ENCODE measurements at regions of chr20 and their contacts with region 1.

Region 1: GRCh38 chr20:41339507-41340326 is 904 bp upstream of the LPIN3 start:
- DNase-seq: peak; percentile 90 to 93
- H3K4me3 ChIP-seq: peak overlapping the region in 1 of 3 donors; percentile 22
- H3K27ac ChIP-seq: peak overlapping the region; percentile 21 to 84 (median 81)
- H3K4me1 ChIP-seq: peaks cover 25 to 50% of the 10 kb centered on the region in 2 donors
- H3K27me3 ChIP-seq: no peaks in the 10 kb centered on the region
- CTCF ChIP-seq: peak; percentile 97 to 99 (median 99)
- POLR2A ChIP-seq: peak in 1 of 2 donors; percentile 28

Region 2: GRCh38 chr20:41136680-41137613 is 202.8 kb before region 1 on chr20 and contains the start of gene PLCG1:
- intact Hi-C with region 1: loop called (anchors 10 kb)
- DNase-seq: peak; percentile 93
- H3K4me3 ChIP-seq: peak within 1 kb of the TSS; percentile 73 to 93 (median 93)
- H3K27ac ChIP-seq: peak within 1 kb of the TSS; percentile 89 to 98 (median 96)
- H3K4me1 ChIP-seq: peaks cover 36 to 38% of the 10 kb centered on the region in 2 donors
- H3K27me3 ChIP-seq: no peaks in the 10 kb centered on the region
- CTCF ChIP-seq: peak in 2 of 6 experiments; percentile 1 to 23
- POLR2A ChIP-seq: peak; percentile 71 to 89
- total RNA-seq, gene PLCG1: 146 to 252 (median 164) TPM